B cell (primary cell): ENCODE measurements at regions of chr16 and their contacts with region 1.

Region 1: DNA sequence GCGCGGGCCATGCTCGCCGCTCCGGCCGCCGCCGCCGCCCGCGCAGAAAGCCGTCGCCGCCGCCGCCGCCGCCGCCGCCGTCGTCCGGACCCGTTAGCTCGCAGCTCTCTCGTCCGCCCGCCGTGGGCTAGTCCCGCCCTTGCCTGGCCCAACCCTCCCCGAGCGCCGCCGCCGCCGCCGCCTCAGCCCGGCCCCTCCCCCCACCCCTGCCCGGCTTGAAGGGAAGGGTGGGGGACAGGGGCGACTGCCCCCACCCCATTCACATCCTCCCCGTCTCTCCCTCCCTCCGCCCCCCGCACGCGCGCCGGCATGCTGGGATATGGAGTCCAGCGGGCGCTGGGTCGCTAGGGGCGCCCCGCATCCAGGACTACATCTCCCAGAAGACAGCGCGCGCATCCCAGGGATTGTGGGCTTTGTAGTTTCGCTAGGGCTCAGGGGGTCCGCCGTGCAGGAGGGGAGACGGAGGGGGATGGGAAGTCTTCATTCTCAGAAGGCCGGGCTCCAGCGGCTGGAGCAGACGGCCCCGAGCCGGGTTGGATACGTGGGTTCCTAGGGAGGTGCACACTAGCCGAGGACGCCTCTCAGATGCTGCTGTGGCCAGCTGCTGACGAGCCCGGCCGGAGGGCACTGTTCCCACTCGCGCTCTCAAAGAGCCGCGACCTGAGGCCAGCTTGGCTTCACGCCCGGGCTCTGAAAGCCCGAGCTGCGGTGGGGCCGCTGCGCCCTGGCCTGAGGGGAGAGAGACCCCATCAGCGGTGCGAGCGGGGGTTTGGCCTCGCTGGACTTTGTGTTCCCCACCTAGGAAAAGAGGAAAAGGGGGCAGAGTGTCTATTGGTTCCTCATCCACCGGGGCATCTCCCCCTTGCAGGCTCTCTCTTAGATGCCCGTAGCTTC is at the start of gene ST3GAL2:
- DNase-seq: peak; percentile 93
- ATAC-seq: peak; percentile 97
- H3K4me3 ChIP-seq: peak within 1 kb of the TSS; percentile 67 to 82 (median 73)
- H3K4me3 Mint-ChIP-seq: peak within 1 kb of the TSS; percentile 91
- H3K27ac ChIP-seq: peak within 1 kb of the TSS; percentile 47 to 51
- H3K27ac Mint-ChIP-seq: peak within 1 kb of the TSS; percentile 90
- H3K4me1 ChIP-seq: peaks cover 34 to 40% of the 10 kb centered on the region in 2 donors
- H3K4me1 Mint-ChIP-seq: peaks cover 39% of the 10 kb centered on the region
- H3K27me3 ChIP-seq: no peaks in the 10 kb centered on the region
- H3K27me3 Mint-ChIP-seq: no peaks in the 10 kb centered on the region
- CTCF ChIP-seq: no peak
- total RNA-seq, gene ST3GAL2: 71.3 and 77.1 TPM in 2 replicates

Region 2: GRCh38 chr16:70380861-70381603 is 58.2 kb before region 1 on chr16:
- CTCF ChIA-PET with region 1: interaction called, 13 read pairs
- POLR2A ChIA-PET with region 1: interaction called, 23 read pairs
- intact Hi-C with region 1: loop called (anchors 1 kb)
- DNase-seq: peak; percentile 96
- ATAC-seq: peak; percentile 93
- H3K4me3 ChIP-seq: peak overlapping the region; percentile 58 to 89 (median 74)
- H3K4me3 Mint-ChIP-seq: peak overlapping the region; percentile 97
- H3K27ac ChIP-seq: peak overlapping the region; percentile 64 to 81
- H3K27ac Mint-ChIP-seq: peak overlapping the region; percentile 95
- H3K4me1 ChIP-seq: peaks cover 18 to 25% of the 10 kb centered on the region in 2 donors
- H3K4me1 Mint-ChIP-seq: peaks cover 8% of the 10 kb centered on the region
- H3K27me3 ChIP-seq: no peaks in the 10 kb centered on the region
- H3K27me3 Mint-ChIP-seq: no peaks in the 10 kb centered on the region
- CTCF ChIP-seq: no peak

Region 3: DNA sequence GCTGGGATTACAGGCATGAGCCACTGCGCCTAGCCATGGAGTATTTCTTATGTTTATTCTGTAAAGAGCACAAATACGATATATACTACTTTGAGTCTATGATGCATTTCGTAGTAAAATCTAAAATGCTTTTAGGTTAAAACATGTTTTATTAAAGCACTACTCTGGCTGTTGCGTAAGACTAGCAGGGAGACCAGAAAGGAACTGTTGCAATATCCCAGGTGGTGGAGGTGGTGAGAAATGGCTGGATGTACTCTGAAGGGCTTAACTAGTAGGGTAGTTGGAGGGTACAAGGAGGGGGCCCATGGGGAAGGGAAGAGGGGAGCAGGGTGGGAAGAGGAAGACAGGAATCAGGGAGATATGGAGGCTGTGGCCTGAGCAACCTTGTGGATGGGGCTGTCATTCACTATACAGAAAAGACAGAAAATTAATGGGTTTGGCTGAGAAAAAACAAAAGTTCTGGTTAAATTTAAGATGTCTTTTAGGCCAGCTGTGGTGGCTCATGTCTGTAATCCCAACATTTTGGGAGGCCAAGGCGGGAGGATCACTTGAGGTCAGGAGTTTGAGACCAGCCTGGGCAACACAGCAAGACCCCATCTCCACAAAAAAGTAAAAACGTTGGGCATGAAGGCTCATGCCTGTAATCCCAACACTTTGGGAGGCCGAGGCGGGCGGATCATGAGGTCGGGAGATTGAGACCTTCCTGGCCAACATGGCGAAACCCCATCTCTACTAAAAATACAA is 36.1 kb before region 1 on chr16:
- CTCF ChIA-PET with region 1: interaction called, 3 read pairs
- POLR2A ChIA-PET with region 1: interaction called, 12 read pairs
- intact Hi-C with region 1: loop called (anchors 2 kb)
- DNase-seq: no peak
- ATAC-seq: no peak
- H3K4me3 ChIP-seq: no peak overlapping the region
- H3K4me3 Mint-ChIP-seq: peak overlapping the region; percentile 20
- H3K27ac ChIP-seq: no peak overlapping the region
- H3K27ac Mint-ChIP-seq: peak overlapping the region; percentile 8
- H3K4me1 ChIP-seq: peaks cover 39 to 52% of the 10 kb centered on the region in 2 donors
- H3K4me1 Mint-ChIP-seq: peaks cover 45% of the 10 kb centered on the region
- H3K27me3 ChIP-seq: peaks cover 0 to 2% (median 0%) of the 10 kb centered on the region in 4 experiments
- H3K27me3 Mint-ChIP-seq: no peaks in the 10 kb centered on the region
- CTCF ChIP-seq: no peak

Region 4: GRCh38 chr16:70416748-70417616 is 22.2 kb before region 1 on chr16:
- CTCF ChIA-PET with region 1: interaction called, 3 read pairs
- POLR2A ChIA-PET with region 1: no interaction called
- intact Hi-C with region 1: loop called (anchors 2 kb)
- DNase-seq: peak; percentile 81
- ATAC-seq: peak; percentile 93
- H3K4me3 ChIP-seq: no peak overlapping the region
- H3K4me3 Mint-ChIP-seq: peak overlapping the region; percentile 71
- H3K27ac ChIP-seq: peak overlapping the region; percentile 51 to 54
- H3K27ac Mint-ChIP-seq: peak overlapping the region; percentile 76
- H3K4me1 ChIP-seq: peaks cover 40 to 44% of the 10 kb centered on the region in 2 donors
- H3K4me1 Mint-ChIP-seq: peaks cover 59% of the 10 kb centered on the region
- H3K27me3 ChIP-seq: no peaks in the 10 kb centered on the region
- H3K27me3 Mint-ChIP-seq: no peaks in the 10 kb centered on the region
- CTCF ChIP-seq: no peak